Activated CD4-positive, alpha-beta T cell treated with anti-CD3 and anti-CD28 coated beads for 36 hours (primary cell): ENCODE measurements at regions of chr2 and their contacts with region 1.

Region 1: GRCh38 chr2:219597552-219598307 is at the start of gene STK11IP:
- DNase-seq: peak; percentile 95
- ATAC-seq: peak; percentile 91
- H3K4me3 Mint-ChIP-seq: peak within 1 kb of the TSS; percentile 82
- H3K27ac Mint-ChIP-seq: peak within 1 kb of the TSS; percentile 97
- H3K4me1 Mint-ChIP-seq: peaks cover 16% of the 10 kb centered on the region
- H3K27me3 Mint-ChIP-seq: peaks cover 4% of the 10 kb centered on the region
- total RNA-seq, gene STK11IP: 23.5 to 26.1 TPM

Region 2: GRCh38 chr2:218516614-218517013 is 1081.1 kb before region 1 on chr2:
- CTCF ChIA-PET with region 1: no interaction called
- POLR2A ChIA-PET with region 1: no interaction called
- intact Hi-C with region 1: no loop called
- DNase-seq: peak; percentile 10
- ATAC-seq: peak; percentile 73
- H3K4me3 Mint-ChIP-seq: no peak overlapping the region
- H3K27ac Mint-ChIP-seq: no peak overlapping the region
- H3K4me1 Mint-ChIP-seq: peaks cover 30% of the 10 kb centered on the region
- H3K27me3 Mint-ChIP-seq: no peaks in the 10 kb centered on the region

Region 3: GRCh38 chr2:219253753-219254590 is 343.8 kb before region 1 on chr2 and contains the start of gene TUBA4A:
- CTCF ChIA-PET with region 1: no interaction called
- POLR2A ChIA-PET with region 1: no interaction called
- intact Hi-C with region 1: loop called in 1 of 2 experiments (anchors 5 kb)
- DNase-seq: peak; percentile 94
- ATAC-seq: peak; percentile 63
- H3K4me3 Mint-ChIP-seq: peak within 1 kb of the TSS; percentile 89
- H3K27ac Mint-ChIP-seq: peak within 1 kb of the TSS; percentile 93
- H3K4me1 Mint-ChIP-seq: peaks cover 54% of the 10 kb centered on the region
- H3K27me3 Mint-ChIP-seq: no peaks in the 10 kb centered on the region
- total RNA-seq, gene TUBA4A: 210 to 369 TPM

Region 4: GRCh38 chr2:219498280-219499057 is 99.3 kb before region 1 on chr2 and contains the start of gene GMPPA:
- CTCF ChIA-PET with region 1: interaction called, 4 read pairs
- POLR2A ChIA-PET with region 1: no interaction called
- intact Hi-C with region 1: loop called (anchors 1 kb)
- DNase-seq: peak; percentile 96
- ATAC-seq: peak; percentile 97
- H3K4me3 Mint-ChIP-seq: peak within 1 kb of the TSS; percentile 86
- H3K27ac Mint-ChIP-seq: peak within 1 kb of the TSS; percentile 72
- H3K4me1 Mint-ChIP-seq: peaks cover 38% of the 10 kb centered on the region
- H3K27me3 Mint-ChIP-seq: peaks cover 38% of the 10 kb centered on the region
- total RNA-seq, gene GMPPA: 35.2 to 35.5 TPM

Region 5: DNA sequence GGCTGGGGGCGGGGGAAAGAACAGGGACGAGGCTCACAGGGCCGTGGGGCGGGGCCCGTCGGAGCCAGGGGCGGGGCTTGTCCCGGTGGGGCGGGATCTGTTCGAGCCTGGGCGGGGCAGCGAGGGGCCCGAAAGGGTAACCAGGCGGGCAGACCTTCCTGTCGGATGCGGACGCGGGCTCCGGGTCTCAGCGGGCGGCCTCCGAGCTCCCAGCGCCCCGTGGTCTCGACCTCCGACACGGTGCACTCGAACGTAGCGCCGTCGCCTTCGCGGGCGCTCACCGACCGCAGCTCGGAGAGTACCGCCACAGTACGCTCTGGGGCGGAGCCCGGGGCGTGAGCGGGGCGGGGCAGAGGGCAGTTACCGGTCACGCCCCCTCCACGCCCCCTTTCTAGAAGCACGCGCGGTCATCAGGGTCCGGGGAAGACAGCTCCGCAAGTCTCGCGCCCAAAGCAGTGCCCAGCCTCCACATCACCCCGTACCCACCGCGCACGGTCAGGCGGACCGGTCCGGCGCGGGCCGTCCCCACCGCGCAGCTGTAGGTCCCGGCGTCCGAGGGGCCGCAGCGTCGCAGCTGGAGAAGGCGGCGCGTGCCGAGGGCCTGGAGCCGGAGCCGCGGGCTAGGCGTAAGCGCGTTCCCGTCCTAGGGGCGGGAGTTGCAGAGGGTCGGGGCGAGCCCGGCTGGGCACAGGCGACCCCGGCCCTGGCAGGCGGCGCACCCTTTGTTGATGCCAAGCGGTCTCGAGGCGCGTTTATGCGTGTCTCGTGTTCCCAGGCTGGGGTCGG is 45.2 kb before region 1 on chr2:
- CTCF ChIA-PET with region 1: interaction called, 5 read pairs
- POLR2A ChIA-PET with region 1: no interaction called
- intact Hi-C with region 1: loop called in 1 of 2 experiments (anchors 1 kb)
- DNase-seq: peak; percentile 89
- ATAC-seq: peak; percentile 94
- H3K4me3 Mint-ChIP-seq: peak overlapping the region; percentile 66
- H3K27ac Mint-ChIP-seq: no peak overlapping the region
- H3K4me1 Mint-ChIP-seq: peaks cover 5% of the 10 kb centered on the region
- H3K27me3 Mint-ChIP-seq: peaks cover 31% of the 10 kb centered on the region

Region 6: DNA sequence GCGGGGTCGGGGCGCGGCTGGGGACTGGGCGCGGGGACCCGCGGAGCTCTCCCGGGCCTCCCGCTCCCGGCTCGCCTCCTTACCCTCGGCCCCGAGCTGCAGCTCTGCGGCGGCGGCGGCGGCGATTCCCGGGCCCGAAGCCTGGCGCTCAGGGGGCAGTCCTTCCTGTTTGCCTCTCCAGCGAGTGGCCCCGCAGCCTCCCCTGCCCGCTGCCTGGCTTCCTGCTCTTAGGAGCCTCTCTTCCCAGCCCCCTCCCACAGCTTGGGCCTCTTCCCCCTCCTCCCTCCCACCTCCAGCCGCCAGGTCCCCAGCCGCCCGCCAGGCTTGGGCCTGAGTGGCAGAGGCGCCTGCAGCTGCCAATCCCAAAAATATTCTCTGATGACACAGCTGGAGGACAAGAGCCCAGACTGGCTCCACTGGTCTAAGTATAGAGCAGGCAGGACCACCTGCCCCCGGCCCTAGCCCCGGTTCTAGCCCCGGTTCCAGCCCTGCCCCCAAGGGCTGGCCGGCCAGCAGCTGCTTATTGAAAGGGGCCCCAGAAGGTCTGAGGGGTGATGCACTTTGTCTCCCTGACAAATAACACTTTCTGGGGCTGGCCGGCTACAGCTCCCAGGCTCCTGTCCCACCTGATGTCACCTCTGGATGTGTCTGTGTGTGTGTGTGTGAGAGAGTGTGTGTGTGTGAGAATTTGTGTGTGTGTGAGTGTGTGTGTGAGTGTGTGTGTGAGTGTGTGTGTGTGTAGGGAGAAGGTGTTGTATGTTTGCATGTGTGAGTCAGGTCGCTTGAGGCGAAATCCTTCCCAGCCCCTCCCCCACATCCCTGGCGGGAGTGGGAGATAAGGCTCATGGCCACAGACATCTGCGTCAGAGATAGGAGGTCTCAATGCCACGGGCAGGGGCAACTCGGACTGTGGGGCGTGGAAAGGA is 26.2 kb before region 1 on chr2 and contains the start of gene OBSL1:
- CTCF ChIA-PET with region 1: interaction called, 3 read pairs
- POLR2A ChIA-PET with region 1: interaction called, 9 read pairs
- intact Hi-C with region 1: loop called in 1 of 2 experiments (anchors 2 kb)
- DNase-seq: peak; percentile 21
- ATAC-seq: no peak
- H3K4me3 Mint-ChIP-seq: peak within 1 kb of the TSS; percentile 43
- H3K27ac Mint-ChIP-seq: no peak within 1 kb of the TSS
- H3K4me1 Mint-ChIP-seq: no peaks in the 10 kb centered on the region
- H3K27me3 Mint-ChIP-seq: peaks cover 32% of the 10 kb centered on the region
- total RNA-seq, gene OBSL1: 1.0 to 1.9 TPM

Region 7: GRCh38 chr2:219689676-219690628 is 92.2 kb after region 1 on chr2:
- CTCF ChIA-PET with region 1: interaction called, 9 read pairs
- POLR2A ChIA-PET with region 1: no interaction called
- intact Hi-C with region 1: loop called in 1 of 2 experiments (anchors 1 kb)
- DNase-seq: peak; percentile 65
- ATAC-seq: peak; percentile 37
- H3K4me3 Mint-ChIP-seq: no peak overlapping the region
- H3K27ac Mint-ChIP-seq: no peak overlapping the region
- H3K4me1 Mint-ChIP-seq: peaks cover 16% of the 10 kb centered on the region
- H3K27me3 Mint-ChIP-seq: peaks cover 21% of the 10 kb centered on the region